Brain microvascular endothelial cell (primary cell): ENCODE measurements at regions of chr1 and their contacts with region 1.

Region 1: DNA sequence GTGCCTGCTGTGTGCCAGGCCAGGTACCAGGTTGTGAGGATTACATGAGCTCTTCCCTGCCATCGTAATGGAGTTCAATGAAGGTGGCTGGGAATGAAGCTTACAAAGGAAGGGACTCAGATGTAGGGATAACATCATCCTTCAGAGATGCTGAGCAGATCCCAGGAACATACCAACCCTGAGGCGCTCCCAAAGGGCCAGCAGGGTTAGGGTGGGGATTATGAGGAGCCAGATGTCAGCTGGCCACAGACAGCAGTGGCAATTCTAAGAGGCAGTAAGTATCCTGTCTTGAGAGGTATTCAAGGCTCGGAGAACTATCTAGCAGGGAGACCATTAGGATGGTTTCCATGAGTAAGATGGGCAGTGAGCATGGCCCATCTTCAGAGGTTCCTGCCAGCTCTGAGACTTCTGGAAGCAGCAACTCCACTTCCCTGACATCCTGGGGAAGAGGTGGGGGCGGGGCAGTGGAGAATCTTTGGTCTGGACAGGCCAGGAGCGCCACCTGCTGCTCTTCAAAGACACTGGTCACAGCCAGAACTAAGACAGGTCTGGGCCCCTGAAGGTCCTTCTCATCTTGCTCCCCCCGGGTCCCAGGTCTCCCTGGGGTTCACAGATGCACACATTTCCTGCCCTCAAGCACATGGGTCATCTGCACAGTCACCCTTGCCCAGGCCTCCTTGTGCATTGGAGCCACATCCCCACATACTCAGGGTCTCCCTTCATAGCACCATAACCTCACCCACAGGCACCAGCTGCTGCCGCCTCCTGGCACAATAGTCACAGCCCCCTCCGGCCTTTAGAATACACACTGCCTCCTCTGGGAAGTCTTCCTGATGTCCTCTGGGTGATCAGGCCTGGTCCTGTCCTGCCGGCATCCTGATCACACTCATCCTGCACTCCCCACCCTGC is 2.7 kb upstream of the SDC3 start:
- DNase-seq: peak; percentile 71
- H3K4me3 ChIP-seq: no peak overlapping the region
- H3K27ac ChIP-seq: no peak overlapping the region
- H3K27me3 ChIP-seq: no peaks in the 10 kb centered on the region
- CTCF ChIP-seq: peak; percentile 90

Region 2: GRCh38 chr1:30801771-30802198 is 109.5 kb before region 1 on chr1:
- in situ Hi-C with region 1: loop called (anchors 5 kb)
- DNase-seq: peak; percentile 53
- H3K4me3 ChIP-seq: no peak overlapping the region
- H3K27ac ChIP-seq: no peak overlapping the region
- H3K27me3 ChIP-seq: no peaks in the 10 kb centered on the region
- CTCF ChIP-seq: peak; percentile 97